Esophagus squamous epithelium (tissue), 5 donors: ENCODE measurements at regions of chr16 and their contacts with region 1.

Region 1: GRCh38 chr16:84484579-84485254 is 19.7 kb downstream of the MEAK7 start:
- DNase-seq: no peak
- H3K4me3 ChIP-seq: no peak overlapping the region
- H3K27ac ChIP-seq: no peak overlapping the region
- H3K4me1 ChIP-seq: no peaks in the 10 kb centered on the region
- H3K27me3 ChIP-seq: no peaks in the 10 kb centered on the region
- CTCF ChIP-seq: peak in 5 of 6 experiments; percentile 67 to 83 (median 75)
- POLR2A ChIP-seq: no peak

Region 2: GRCh38 chr16:83755391-83755790 is 729.3 kb before region 1 on chr16:
- intact Hi-C with region 1: no loop called
- DNase-seq: no peak
- H3K4me3 ChIP-seq: no peak overlapping the region
- H3K27ac ChIP-seq: no peak overlapping the region
- H3K4me1 ChIP-seq: no peaks in the 10 kb centered on the region
- H3K27me3 ChIP-seq: no peaks in the 10 kb centered on the region
- CTCF ChIP-seq: no peak
- POLR2A ChIP-seq: no peak

Region 3: GRCh38 chr16:84277237-84277823 is 207.4 kb before region 1 on chr16:
- intact Hi-C with region 1: loop called (anchors 10 kb)
- DNase-seq: no peak
- H3K4me3 ChIP-seq: no peak overlapping the region
- H3K27ac ChIP-seq: no peak overlapping the region
- H3K4me1 ChIP-seq: no peaks in the 10 kb centered on the region
- H3K27me3 ChIP-seq: no peaks in the 10 kb centered on the region
- CTCF ChIP-seq: peak; percentile 64 to 93 (median 86)
- POLR2A ChIP-seq: no peak

Region 4: DNA sequence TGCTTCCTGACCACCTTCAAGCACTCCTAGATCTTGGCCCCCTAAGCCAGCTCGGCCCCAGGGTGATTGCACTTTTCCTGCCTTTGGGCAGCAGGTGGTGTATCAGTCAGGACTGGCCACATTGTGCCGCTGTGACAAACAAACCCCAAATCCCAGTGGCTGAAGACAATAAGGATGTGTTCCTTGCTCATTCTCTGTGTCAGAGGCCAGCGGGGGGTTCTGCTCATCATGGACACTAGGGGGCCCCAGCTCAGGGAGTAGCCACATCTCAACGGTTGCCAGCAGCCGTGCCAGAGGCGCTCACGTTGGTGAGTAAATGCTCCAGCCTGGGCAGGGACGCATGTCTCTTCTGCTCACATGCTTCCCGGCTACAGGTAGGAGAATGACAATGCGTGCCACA is 466.2 kb after region 1 on chr16:
- intact Hi-C with region 1: no loop called
- DNase-seq: no peak
- H3K4me3 ChIP-seq: no peak overlapping the region
- H3K27ac ChIP-seq: no peak overlapping the region
- H3K4me1 ChIP-seq: peaks cover 6 to 33% (median 14%) of the 10 kb centered on the region in 3 donors
- H3K27me3 ChIP-seq: no peaks in the 10 kb centered on the region
- CTCF ChIP-seq: peak in 1 of 6 experiments; percentile 36
- POLR2A ChIP-seq: no peak